OCI-LY7 (cell line): ENCODE measurements at regions of chr6 and their contacts with region 1.

Region 1: GRCh38 chr6:135267085-135267484 is 86.0 kb downstream of the MYB start:
- DNase-seq: peak; percentile 98
- H3K4me3 ChIP-seq: peak overlapping the region; percentile 31
- H3K27ac ChIP-seq: peak overlapping the region; percentile 92
- H3K4me1 ChIP-seq: peaks cover 93% of the 10 kb centered on the region
- CTCF ChIP-seq: no peak

Region 2: GRCh38 chr6:135014353-135014832 is 252.7 kb before region 1 on chr6:
- CTCF ChIA-PET with region 1: no interaction called
- POLR2A ChIA-PET with region 1: no interaction called
- intact Hi-C with region 1: no loop called
- DNase-seq: no peak
- H3K4me3 ChIP-seq: no peak overlapping the region
- H3K27ac ChIP-seq: no peak overlapping the region
- H3K4me1 ChIP-seq: peaks cover 14% of the 10 kb centered on the region
- CTCF ChIP-seq: no peak

Region 3: DNA sequence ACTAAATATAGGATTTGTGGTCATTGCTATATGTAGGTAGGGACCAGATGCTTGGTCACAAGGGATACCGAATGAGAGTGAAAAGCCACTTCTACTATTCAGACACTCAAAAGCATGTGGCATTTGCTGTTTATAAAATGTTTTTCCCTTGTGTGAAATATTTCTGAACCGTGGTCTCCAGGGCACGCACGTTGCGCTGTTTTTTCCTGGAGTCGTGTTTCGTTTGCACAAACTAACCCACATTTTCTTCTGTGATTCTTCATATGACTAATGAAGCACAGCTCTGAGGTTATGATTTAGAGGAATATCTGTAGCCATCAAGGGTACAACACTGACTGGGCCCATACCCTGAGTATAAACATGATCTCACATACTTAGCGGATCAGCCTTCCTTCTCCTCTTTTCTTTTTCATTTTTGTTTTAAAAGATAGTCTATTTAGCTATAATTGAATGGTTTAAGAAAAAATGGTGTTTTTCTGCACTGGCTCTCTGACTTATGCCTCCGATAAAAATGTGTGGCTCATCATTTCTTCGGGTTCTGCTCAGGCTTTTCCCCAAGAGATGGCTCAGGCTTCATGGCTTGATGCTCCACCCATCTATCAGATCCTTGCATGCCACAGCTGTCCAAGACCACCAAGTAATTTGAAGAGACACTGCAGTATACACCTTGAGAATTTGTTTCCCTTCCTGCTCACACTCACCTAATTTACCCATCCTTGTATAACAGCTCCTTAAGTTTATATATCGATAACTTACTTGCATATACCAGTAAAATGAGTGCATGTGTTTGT is 152.5 kb before region 1 on chr6:
- CTCF ChIA-PET with region 1: no interaction called
- POLR2A ChIA-PET with region 1: no interaction called
- intact Hi-C with region 1: no loop called
- DNase-seq: no peak
- H3K4me3 ChIP-seq: no peak overlapping the region
- H3K27ac ChIP-seq: no peak overlapping the region
- H3K4me1 ChIP-seq: peaks cover 14% of the 10 kb centered on the region
- CTCF ChIP-seq: no peak

Region 4: GRCh38 chr6:135280375-135281136 is 13.5 kb after region 1 on chr6:
- CTCF ChIA-PET with region 1: interaction called, 5 read pairs
- POLR2A ChIA-PET with region 1: interaction called, 17 read pairs
- intact Hi-C with region 1: no loop called
- DNase-seq: peak; percentile 87
- H3K4me3 ChIP-seq: peak overlapping the region; percentile 41
- H3K27ac ChIP-seq: peak overlapping the region; percentile 72
- H3K4me1 ChIP-seq: peaks cover 41% of the 10 kb centered on the region
- CTCF ChIP-seq: no peak

Region 5: DNA sequence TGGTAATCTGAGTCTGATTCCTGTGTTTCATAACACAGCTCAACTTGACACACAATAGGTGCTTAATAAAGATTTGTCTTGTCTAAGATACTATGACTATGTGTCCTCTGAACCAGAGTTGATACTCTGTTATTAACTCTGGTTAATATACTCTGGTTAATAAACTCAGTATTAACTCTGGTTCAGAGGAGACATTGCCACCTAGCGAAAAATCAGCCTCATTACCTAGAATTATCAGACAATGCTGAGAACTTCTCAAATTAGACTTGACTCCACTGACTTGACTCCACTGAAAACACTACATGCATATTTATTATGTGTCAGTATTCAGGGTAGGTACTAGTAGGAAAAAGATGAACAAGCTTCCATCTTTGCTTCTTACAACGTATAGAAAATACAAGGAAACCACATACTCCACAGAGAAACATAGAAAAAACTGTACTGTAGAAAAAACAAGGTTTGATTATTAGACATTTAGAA is 156.6 kb after region 1 on chr6:
- CTCF ChIA-PET with region 1: no interaction called
- POLR2A ChIA-PET with region 1: no interaction called
- intact Hi-C with region 1: loop called (anchors 2 kb)
- DNase-seq: peak; percentile 77
- H3K4me3 ChIP-seq: no peak overlapping the region
- H3K27ac ChIP-seq: peak overlapping the region; percentile 5
- H3K4me1 ChIP-seq: peaks cover 11% of the 10 kb centered on the region
- CTCF ChIP-seq: peak; percentile 96

Region 6: GRCh38 chr6:135630789-135631376 is 363.8 kb after region 1 on chr6:
- CTCF ChIA-PET with region 1: no interaction called
- POLR2A ChIA-PET with region 1: no interaction called
- intact Hi-C with region 1: no loop called
- DNase-seq: no peak
- H3K4me3 ChIP-seq: no peak overlapping the region
- H3K27ac ChIP-seq: no peak overlapping the region
- H3K4me1 ChIP-seq: no peaks in the 10 kb centered on the region
- CTCF ChIP-seq: no peak

Region 7: GRCh38 chr6:135922174-135922573 is 655.1 kb after region 1 on chr6:
- CTCF ChIA-PET with region 1: no interaction called
- POLR2A ChIA-PET with region 1: no interaction called
- intact Hi-C with region 1: no loop called
- DNase-seq: no peak
- H3K4me3 ChIP-seq: no peak overlapping the region
- H3K27ac ChIP-seq: no peak overlapping the region
- H3K4me1 ChIP-seq: no peaks in the 10 kb centered on the region
- CTCF ChIP-seq: no peak